Caki2 (cell line): ENCODE measurements at regions of chr10 and their contacts with region 1.

Region 1: DNA sequence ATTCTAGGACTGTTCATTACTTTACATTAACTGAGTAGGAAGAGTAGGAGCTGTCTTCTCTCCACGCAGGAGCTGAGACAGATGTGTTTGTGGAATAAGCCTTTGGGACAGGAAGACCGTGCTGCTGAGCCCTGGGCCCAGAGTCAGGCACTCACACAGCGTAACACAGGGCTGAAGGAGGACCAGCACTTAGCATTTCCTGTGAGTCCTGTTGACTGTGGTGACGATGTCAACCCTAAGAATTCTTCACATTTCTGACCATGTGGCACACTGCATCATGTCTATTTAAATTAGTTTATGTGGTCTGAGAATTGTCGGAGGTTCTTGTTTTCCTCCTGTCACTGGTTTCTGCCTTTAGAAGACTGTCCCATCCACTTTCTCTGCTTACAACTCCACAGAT is 117.2 kb downstream of the PIP4K2A start:
- DNase-seq: no peak

Region 2: GRCh38 chr10:22648547-22648961 is 51.4 kb after region 1 on chr10:
- in situ Hi-C with region 1: no loop called
- DNase-seq: peak; percentile 98

Region 3: DNA sequence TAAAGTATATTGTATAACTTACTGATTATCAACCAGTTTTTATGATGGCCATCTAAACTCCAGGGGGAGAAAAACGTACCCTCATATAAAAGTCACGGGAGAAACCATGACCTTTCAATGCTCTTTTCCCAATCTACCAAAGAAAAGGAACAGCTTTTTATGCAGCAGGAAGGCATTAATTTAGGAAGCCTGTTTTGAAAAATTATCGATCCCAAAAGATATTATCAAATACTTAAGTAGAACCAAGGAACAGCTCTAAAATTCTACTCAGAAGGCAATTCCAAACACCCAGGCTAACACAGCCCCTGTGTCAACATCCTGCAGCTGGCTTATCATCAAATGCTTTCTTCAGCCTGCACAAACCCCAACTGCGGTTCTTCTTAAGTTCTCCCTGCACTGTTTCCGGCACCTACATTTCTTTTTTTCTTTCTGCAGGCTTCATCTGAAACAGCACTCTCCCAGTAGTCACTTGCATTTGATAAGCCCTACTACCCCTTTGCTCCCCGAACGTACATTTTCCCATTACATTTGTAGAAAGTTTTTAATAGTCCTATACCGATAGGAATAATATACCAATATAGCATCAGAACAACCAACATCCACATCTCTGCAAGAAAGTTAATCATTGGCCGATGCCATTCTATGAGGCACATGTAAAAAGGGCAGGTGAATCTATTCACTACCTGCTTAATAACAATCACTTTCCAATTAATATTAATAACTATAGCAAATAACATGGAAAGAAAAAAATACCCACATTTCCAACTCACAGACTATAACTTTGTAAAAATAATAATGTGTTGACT is 69.4 kb after region 1 on chr10:
- in situ Hi-C with region 1: no loop called
- DNase-seq: no peak

Region 4: GRCh38 chr10:22988581-22989360 is 391.6 kb after region 1 on chr10:
- in situ Hi-C with region 1: loop called (anchors 25 kb)
- DNase-seq: peak; percentile 63